Right lobe of liver (tissue), 6 donors: ENCODE measurements at regions of chr17 and their contacts with region 1.

Region 1: GRCh38 chr17:40224718-40225550 is 5.8 kb downstream of the WIPF2 start:
- DNase-seq: no peak
- ATAC-seq: no peak
- H3K4me3 ChIP-seq: no peak overlapping the region
- H3K27ac ChIP-seq: no peak overlapping the region
- H3K4me1 ChIP-seq: peaks cover 0 to 5% (median 2%) of the 10 kb centered on the region in 4 donors
- H3K27me3 ChIP-seq: no peaks in the 10 kb centered on the region
- CTCF ChIP-seq: no peak
- POLR2A ChIP-seq: no peak

Region 2: GRCh38 chr17:40279407-40279806 is 54.5 kb after region 1 on chr17:
- intact Hi-C with region 1: loop called in 1 of 2 experiments (anchors 5 kb)
- DNase-seq: no peak
- ATAC-seq: no peak
- H3K4me3 ChIP-seq: no peak overlapping the region
- H3K27ac ChIP-seq: no peak overlapping the region
- H3K4me1 ChIP-seq: peaks cover 0 to 13% (median 6%) of the 10 kb centered on the region in 4 donors
- H3K27me3 ChIP-seq: no peaks in the 10 kb centered on the region
- CTCF ChIP-seq: no peak
- POLR2A ChIP-seq: no peak

Region 3: GRCh38 chr17:40417609-40418427 is 192.9 kb after region 1 on chr17 and contains the start of gene TOP2A:
- intact Hi-C with region 1: no loop called
- DNase-seq: peak; percentile 84 to 99 (median 90)
- ATAC-seq: peak; percentile 95 to 98 (median 98)
- H3K4me3 ChIP-seq: peak within 1 kb of the TSS; percentile 42 to 62 (median 52)
- H3K27ac ChIP-seq: no peak within 1 kb of the TSS
- H3K4me1 ChIP-seq: peaks cover 0 to under 1% (median 0%) of the 10 kb centered on the region in 4 donors
- H3K27me3 ChIP-seq: no peaks in the 10 kb centered on the region
- CTCF ChIP-seq: no peak
- POLR2A ChIP-seq: no peak
- total RNA-seq, gene TOP2A: 0.22 to 7.3 (median 3.0) TPM